ENCODE measurements at regions of chr14 and their contacts with region 1.

Region 1: DNA sequence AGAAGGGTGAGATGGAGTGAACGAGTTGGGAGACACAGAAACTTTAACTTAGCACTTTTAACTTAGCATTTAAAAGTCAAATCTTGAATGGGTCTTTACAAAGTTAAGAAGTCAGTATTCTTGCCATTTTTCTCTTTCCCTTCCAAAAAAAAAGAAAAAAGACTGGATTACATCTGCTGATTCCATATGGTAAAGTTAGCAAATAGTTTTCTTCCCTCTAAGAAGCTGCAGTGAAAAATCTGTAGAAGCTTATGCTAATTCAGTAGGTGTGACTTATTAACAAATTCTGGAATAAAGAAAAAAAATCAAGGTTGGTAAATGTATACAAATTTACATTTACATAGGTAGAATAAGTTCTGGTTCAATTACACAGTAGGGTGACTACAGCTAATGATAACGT is 50.9 kb downstream of the COCH start:
- DNase-seq: no peak
- ATAC-seq: no peak
- H3K4me3 ChIP-seq: no peak overlapping the region
- H3K27ac ChIP-seq: no peak overlapping the region
- H3K4me1 ChIP-seq: no peaks in the 10 kb centered on the region
- H3K27me3 ChIP-seq: no peaks in the 10 kb centered on the region
- CTCF ChIP-seq: no peak

Region 2: GRCh38 chr14:30874120-30874998 is 50.9 kb before region 1 on chr14 and contains the start of gene COCH:
- CTCF ChIA-PET with region 1: no interaction called
- POLR2A ChIA-PET with region 1: no interaction called
- in situ Hi-C with region 1: no loop called
- intact Hi-C with region 1: no loop called
- DNase-seq: no peak
- ATAC-seq: peak; percentile 84
- H3K4me3 ChIP-seq: peak within 1 kb of the TSS; percentile 43 to 50
- H3K27ac ChIP-seq: no peak within 1 kb of the TSS
- H3K4me1 ChIP-seq: no peaks in the 10 kb centered on the region
- H3K27me3 ChIP-seq: peaks cover 10% of the 10 kb centered on the region
- CTCF ChIP-seq: peak; percentile 58
- total RNA-seq, gene COCH: 1.3 TPM

Region 3: DNA sequence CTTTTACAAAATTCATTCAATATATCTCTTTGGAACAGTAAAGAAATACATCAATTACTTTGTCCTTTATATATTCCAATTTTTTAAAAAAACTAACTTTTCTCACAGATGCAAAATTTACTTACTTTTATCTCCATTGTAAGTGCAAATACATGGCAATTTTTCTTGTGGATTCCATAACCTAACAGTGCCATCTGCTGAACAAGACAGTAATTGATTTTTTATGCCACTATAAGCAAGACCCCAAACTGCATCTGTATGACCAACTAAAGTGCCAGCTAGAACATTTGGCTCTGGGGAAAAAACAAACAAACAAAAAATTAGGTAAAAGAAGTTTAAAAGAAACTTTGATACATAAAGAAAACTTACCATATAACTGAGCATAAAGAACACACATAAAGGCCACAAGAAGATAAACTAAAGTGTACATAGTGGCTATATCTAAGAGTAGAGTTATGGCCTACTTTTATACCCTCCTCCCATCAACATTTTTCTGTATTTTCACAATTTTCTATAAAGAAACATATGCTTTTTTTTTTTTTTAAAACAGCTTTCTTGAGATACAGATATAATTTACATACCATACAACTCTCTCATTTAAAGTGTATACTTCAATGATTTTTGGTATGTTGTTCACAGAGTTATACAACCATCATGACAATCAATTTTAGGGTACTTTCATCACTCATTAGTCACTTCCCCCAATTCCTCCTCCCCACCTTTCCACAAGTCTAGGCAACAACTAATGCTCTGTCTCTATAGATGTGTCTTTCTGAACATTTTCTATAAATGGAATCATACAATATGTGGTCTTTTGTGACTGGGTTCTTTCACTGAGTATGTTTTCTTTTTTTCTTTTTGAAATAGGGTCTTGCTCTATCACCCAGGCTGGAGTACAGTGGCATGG is 18.2 kb before region 1 on chr14:
- CTCF ChIA-PET with region 1: no interaction called
- POLR2A ChIA-PET with region 1: no interaction called
- in situ Hi-C with region 1: no loop called
- intact Hi-C with region 1: no loop called
- DNase-seq: peak; percentile 4
- ATAC-seq: no peak
- H3K4me3 ChIP-seq: no peak overlapping the region
- H3K27ac ChIP-seq: no peak overlapping the region
- H3K4me1 ChIP-seq: no peaks in the 10 kb centered on the region
- H3K27me3 ChIP-seq: no peaks in the 10 kb centered on the region
- CTCF ChIP-seq: peak; percentile 19; the same call in 1 of the 2 replicates

Region 4: DNA sequence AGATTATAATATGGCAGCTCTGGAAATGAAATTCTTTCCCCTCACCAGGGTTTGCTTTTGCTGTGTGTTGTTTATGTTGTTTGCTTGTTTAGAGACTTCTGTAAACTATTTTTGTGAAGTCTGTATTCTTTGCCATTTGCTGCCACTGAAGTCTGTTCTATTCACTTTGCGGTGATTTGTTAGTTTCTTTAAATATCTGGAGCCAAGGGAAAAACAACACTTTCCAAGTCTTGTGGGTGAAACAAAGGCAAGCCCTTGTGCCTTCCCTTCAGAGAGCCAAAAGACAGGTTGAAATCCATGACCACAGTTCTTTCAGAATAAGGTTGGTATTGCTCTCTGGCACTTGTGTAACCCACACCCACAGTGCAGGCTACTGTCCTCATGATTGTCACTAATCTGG is 1217.1 kb after region 1 on chr14:
- CTCF ChIA-PET with region 1: no interaction called
- POLR2A ChIA-PET with region 1: interaction called, 11 read pairs
- in situ Hi-C with region 1: no loop called
- intact Hi-C with region 1: no loop called
- DNase-seq: no peak
- ATAC-seq: no peak
- H3K4me3 ChIP-seq: no peak overlapping the region
- H3K27ac ChIP-seq: no peak overlapping the region
- H3K4me1 ChIP-seq: no peaks in the 10 kb centered on the region
- H3K27me3 ChIP-seq: no peaks in the 10 kb centered on the region
- CTCF ChIP-seq: no peak